ENCODE measurements at regions of chrX and their contacts with region 1.

Region 1: GRCh38 chrX:137916090-137916746 is 350.3 kb downstream of the ZIC3 start:
- DNase-seq: no peak
- H3K4me3 ChIP-seq: no peak overlapping the region
- H3K27ac ChIP-seq: no peak overlapping the region
- H3K4me1 ChIP-seq: no peaks in the 10 kb centered on the region
- H3K27me3 ChIP-seq: no peaks in the 10 kb centered on the region
- CTCF ChIP-seq: no peak

Region 2: DNA sequence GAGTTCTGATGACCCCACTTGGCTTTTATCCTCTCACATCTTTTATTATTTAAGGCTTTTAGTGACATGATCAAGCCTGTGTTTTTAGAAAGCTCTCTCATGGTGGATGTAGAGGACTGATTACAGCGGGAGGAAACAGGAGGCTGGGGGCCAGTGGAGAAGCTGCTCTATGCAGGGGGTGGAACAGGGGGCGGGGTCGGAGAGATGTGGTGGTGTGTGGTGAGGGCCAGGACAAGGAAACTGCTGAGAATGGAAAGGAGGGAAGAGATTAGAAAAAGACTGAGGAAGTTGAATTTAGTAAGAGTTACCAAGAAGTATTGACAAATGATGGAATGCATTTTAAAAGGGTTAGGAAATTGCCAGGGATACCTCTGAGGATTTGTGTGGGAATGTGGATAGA is 58.1 kb before region 1 on chrX:
- intact Hi-C with region 1: no loop called
- DNase-seq: no peak
- H3K4me3 ChIP-seq: no peak overlapping the region
- H3K27ac ChIP-seq: no peak overlapping the region
- H3K4me1 ChIP-seq: no peaks in the 10 kb centered on the region
- H3K27me3 ChIP-seq: no peaks in the 10 kb centered on the region
- CTCF ChIP-seq: no peak

Region 3: GRCh38 chrX:137878401-137878800 is 37.8 kb before region 1 on chrX:
- intact Hi-C with region 1: no loop called
- DNase-seq: no peak
- H3K4me3 ChIP-seq: no peak overlapping the region
- H3K27ac ChIP-seq: no peak overlapping the region
- H3K4me1 ChIP-seq: no peaks in the 10 kb centered on the region
- H3K27me3 ChIP-seq: no peaks in the 10 kb centered on the region
- CTCF ChIP-seq: no peak

Region 4: GRCh38 chrX:139647597-139647996 is 1731.4 kb after region 1 on chrX:
- intact Hi-C with region 1: loop called (anchors 5 kb)
- DNase-seq: no peak
- H3K4me3 ChIP-seq: no peak overlapping the region
- H3K27ac ChIP-seq: no peak overlapping the region
- H3K4me1 ChIP-seq: no peaks in the 10 kb centered on the region
- H3K27me3 ChIP-seq: no peaks in the 10 kb centered on the region
- CTCF ChIP-seq: no peak